Natural killer cell (primary cell): ENCODE measurements at regions of chr17 and their contacts with region 1.

Region 1: DNA sequence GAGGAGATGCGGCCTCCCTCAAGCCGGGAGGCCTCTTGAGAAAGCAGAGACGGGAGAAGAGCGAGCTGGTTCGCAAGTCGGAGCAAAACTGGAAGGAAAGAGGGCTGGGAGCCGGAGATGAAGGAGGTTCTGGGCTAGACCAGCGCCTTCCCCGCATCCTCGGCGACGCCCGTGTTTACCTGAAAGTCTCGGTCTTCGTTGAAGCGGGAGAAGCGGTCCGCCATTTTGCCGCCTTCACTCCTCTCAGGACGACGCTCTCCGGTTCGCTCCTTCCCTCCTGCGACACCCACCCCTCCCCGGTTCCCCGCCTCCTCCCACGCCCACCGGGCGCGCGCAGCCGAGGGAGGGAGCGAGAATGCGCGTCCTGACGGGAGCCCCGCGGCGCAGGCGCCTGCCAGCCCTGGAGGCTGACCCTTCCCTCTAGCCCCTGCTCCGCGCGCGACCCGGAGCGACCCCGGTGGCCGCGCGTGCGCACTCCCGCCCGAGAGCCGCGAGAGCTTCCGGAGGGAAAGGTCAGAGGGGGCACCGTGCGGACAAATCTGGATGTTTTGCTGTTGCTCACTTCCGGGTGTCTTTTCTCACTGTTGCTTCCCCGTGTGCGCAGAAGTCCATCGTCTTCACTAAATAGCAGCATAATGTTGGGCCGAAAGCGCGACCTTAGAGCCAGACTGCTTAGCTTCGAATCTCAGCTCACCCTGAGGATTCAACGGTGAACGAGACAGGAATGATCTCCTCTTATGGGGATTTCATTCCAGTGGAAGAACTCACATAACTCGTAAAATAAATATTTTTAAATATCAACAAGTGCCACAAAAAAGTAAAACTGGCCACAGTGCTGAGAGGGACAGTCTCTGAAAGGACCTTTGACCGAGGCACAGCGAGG is at the start of gene GPATCH8:
- DNase-seq: peak; percentile 91 to 96
- ATAC-seq: peak; percentile 88 to 94 (median 91)
- H3K4me3 ChIP-seq: peak within 1 kb of the TSS; percentile 98
- H3K4me3 Mint-ChIP-seq: peak within 1 kb of the TSS; percentile 97
- H3K27ac ChIP-seq: peak within 1 kb of the TSS; percentile 82
- H3K27ac Mint-ChIP-seq: peak within 1 kb of the TSS; percentile 94 to 99
- H3K4me1 ChIP-seq: peaks cover 13% of the 10 kb centered on the region
- H3K4me1 Mint-ChIP-seq: peaks cover 40 to 41% of the 10 kb centered on the region in 2 donors
- H3K27me3 ChIP-seq: no peaks in the 10 kb centered on the region
- H3K27me3 Mint-ChIP-seq: no peaks in the 10 kb centered on the region
- CTCF ChIP-seq: no peak
- total RNA-seq, gene GPATCH8: 104 to 111 (median 109) TPM

Region 2: GRCh38 chr17:44218344-44219107 is 284.9 kb before region 1 on chr17:
- intact Hi-C with region 1: loop called (anchors 10 kb)
- DNase-seq: peak; percentile 84 to 95
- ATAC-seq: peak; percentile 61 to 83 (median 66)
- H3K4me3 ChIP-seq: peak overlapping the region; percentile 53
- H3K4me3 Mint-ChIP-seq: peak overlapping the region; percentile 70
- H3K27ac ChIP-seq: peak overlapping the region; percentile 72
- H3K27ac Mint-ChIP-seq: peak overlapping the region; percentile 72 to 77
- H3K4me1 ChIP-seq: peaks cover 62% of the 10 kb centered on the region
- H3K4me1 Mint-ChIP-seq: peaks cover 42 to 55% of the 10 kb centered on the region in 2 donors
- H3K27me3 ChIP-seq: no peaks in the 10 kb centered on the region
- H3K27me3 Mint-ChIP-seq: no peaks in the 10 kb centered on the region
- CTCF ChIP-seq: peak; percentile 9

Region 3: GRCh38 chr17:44400226-44400847 is 103.1 kb before region 1 on chr17:
- intact Hi-C with region 1: loop called (anchors 5 kb)
- DNase-seq: no peak
- ATAC-seq: peak; percentile 50 to 77 (median 74)
- H3K4me3 ChIP-seq: no peak overlapping the region
- H3K4me3 Mint-ChIP-seq: no peak overlapping the region
- H3K27ac ChIP-seq: peak overlapping the region; percentile 26
- H3K27ac Mint-ChIP-seq: peak overlapping the region; percentile 76 to 79
- H3K4me1 ChIP-seq: no peaks in the 10 kb centered on the region
- H3K4me1 Mint-ChIP-seq: peaks cover 11 to 13% of the 10 kb centered on the region in 2 donors
- H3K27me3 ChIP-seq: no peaks in the 10 kb centered on the region
- H3K27me3 Mint-ChIP-seq: no peaks in the 10 kb centered on the region
- CTCF ChIP-seq: peak; percentile 60

Region 4: DNA sequence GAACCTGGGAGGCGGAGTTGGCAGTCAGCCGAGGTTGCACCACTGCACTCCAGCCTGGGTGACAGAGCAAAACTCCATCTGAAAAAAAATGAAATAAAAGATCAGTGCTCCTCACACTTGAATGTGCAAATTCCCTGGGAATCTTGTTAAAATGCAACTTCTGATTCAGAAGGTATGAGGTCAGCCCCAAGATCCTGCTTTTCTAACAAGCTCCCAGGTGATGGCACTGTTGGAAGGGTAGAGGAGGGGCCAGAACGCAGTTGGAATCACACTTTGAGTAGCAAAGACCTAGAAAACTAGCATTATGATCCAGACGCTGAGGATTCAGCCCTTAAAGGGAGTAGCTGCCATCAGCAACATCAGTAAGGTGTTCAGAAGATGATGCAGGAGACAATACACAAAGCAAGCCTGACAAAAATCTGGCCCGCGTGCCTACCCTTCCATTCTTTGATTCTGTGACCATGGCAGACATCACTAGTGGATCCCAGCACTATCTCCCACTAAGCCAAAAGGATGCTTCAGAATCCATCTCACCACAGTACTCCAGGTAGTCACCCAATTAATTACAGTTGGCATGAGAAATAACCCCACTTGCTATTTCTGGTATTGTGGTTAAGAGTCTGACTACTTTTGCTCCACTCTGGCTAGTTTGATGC is 119.8 kb after region 1 on chr17:
- intact Hi-C with region 1: no loop called
- DNase-seq: no peak
- ATAC-seq: no peak
- H3K4me3 ChIP-seq: no peak overlapping the region
- H3K4me3 Mint-ChIP-seq: no peak overlapping the region
- H3K27ac ChIP-seq: no peak overlapping the region
- H3K27ac Mint-ChIP-seq: no peak overlapping the region
- H3K4me1 ChIP-seq: peaks cover 4% of the 10 kb centered on the region
- H3K4me1 Mint-ChIP-seq: peaks cover 0 to 8% of the 10 kb centered on the region in 2 donors
- H3K27me3 ChIP-seq: no peaks in the 10 kb centered on the region
- H3K27me3 Mint-ChIP-seq: peaks cover 3 to 6% of the 10 kb centered on the region in 2 donors
- CTCF ChIP-seq: no peak